ENCODE measurements at regions of chr3 and their contacts with region 1.

Region 1: GRCh38 chr3:183697610-183698317 is at the start of gene YEATS2:
- DNase-seq: peak; percentile 66
- H3K4me3 ChIP-seq: peak within 1 kb of the TSS; percentile 59 to 98 (median 86)
- H3K27ac ChIP-seq: peak within 1 kb of the TSS; percentile 73
- H3K4me1 ChIP-seq: peaks cover 15% of the 10 kb centered on the region
- H3K27me3 ChIP-seq: no peaks in the 10 kb centered on the region
- CTCF ChIP-seq: no peak
- POLR2A ChIP-seq: peak; percentile 81
- total RNA-seq, gene YEATS2: 59.1 and 59.9 TPM in 2 replicates

Region 2: DNA sequence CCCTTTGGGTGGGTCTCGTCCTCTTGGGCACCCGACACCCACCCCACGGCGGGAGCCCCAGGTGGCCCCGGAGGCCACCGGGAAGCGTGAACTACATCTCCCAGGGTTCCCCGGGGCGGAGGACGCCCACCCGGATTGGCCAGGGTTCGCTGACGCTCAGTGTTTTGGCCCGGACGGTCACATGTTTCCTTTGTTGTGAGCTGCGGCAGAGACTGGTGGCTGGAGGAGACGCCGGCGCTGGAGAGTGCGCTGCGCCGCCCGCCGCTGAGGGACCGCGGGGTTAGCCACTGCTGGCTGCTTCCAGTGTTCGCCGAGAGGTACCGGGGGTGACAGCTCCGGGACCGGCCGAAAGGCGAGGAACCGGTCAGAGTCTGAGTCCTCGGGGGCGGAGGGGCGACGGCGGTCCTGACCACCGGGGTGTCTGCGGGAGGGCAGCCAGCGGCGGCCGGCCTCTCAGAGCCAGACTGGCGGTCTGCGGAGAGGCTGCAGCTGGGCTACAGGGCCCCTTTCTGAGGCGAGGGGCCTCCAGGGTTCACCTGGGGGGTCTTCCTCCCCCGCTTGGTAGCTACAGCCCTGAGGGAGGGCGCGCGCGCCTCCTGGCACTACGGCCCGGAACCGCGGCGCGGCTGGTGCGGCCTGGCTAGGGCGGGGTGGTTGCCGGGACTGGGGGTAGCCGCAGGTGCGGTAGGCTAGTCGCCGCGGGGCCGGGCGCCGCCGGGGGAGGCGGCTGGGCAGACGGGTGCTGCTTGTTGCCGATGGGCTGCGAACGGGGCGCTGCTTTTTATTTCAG is 62.1 kb before region 1 on chr3 and contains the start of gene KLHL24:
- CTCF ChIA-PET with region 1: interaction called, 7 read pairs
- POLR2A ChIA-PET with region 1: interaction called, 3 read pairs
- dilution Hi-C with region 1: no loop called
- intact Hi-C with region 1: loop called (anchors 1 kb)
- DNase-seq: peak; percentile 93
- H3K4me3 ChIP-seq: peak within 1 kb of the TSS; percentile 81 to 99 (median 84)
- H3K27ac ChIP-seq: peak within 1 kb of the TSS; percentile 89
- H3K4me1 ChIP-seq: peaks cover 19% of the 10 kb centered on the region
- H3K27me3 ChIP-seq: no peaks in the 10 kb centered on the region
- CTCF ChIP-seq: no peak
- POLR2A ChIP-seq: peak; percentile 41
- total RNA-seq, gene KLHL24: 45.8 and 46.2 TPM in 2 replicates

Region 3: DNA sequence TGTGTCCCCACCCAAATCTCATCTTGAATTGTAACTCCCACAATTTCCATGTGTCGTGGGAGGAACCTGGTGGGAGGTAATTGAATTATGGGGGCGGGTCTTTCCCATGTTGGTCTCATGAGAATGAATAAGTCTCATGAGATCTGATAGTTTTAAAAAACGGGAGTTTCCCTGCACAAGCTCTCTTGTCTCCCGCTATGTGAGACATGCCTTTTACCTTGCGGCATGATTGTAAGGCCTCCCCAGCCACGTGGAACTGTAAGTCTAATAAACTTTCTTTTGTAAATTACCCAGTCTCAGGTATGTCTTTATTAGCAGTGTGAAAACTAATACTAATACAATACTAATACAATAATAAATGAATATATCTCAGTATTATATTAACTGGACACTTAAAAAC is 10.1 kb before region 1 on chr3:
- CTCF ChIA-PET with region 1: no interaction called
- POLR2A ChIA-PET with region 1: no interaction called
- dilution Hi-C with region 1: no loop called
- intact Hi-C with region 1: no loop called
- DNase-seq: no peak
- H3K4me3 ChIP-seq: no peak overlapping the region
- H3K27ac ChIP-seq: no peak overlapping the region
- H3K4me1 ChIP-seq: no peaks in the 10 kb centered on the region
- H3K27me3 ChIP-seq: no peaks in the 10 kb centered on the region
- CTCF ChIP-seq: no peak
- POLR2A ChIP-seq: no peak

Region 4: GRCh38 chr3:183734750-183735494 is 37.2 kb after region 1 on chr3:
- CTCF ChIA-PET with region 1: interaction called, 3 read pairs
- POLR2A ChIA-PET with region 1: no interaction called
- dilution Hi-C with region 1: no loop called
- intact Hi-C with region 1: loop called (anchors 2 kb)
- DNase-seq: peak; percentile 90
- H3K4me3 ChIP-seq: peak overlapping the region in 1 of 3 experiments; percentile 21
- H3K27ac ChIP-seq: peak overlapping the region; percentile 74
- H3K4me1 ChIP-seq: peaks cover 28% of the 10 kb centered on the region
- H3K27me3 ChIP-seq: no peaks in the 10 kb centered on the region
- CTCF ChIP-seq: no peak
- POLR2A ChIP-seq: no peak

Measured in endothelial cell of umbilical vein (primary cell).